Left colon (tissue), 2 donors: ENCODE measurements at regions of chr15 and their contacts with region 1.

Region 1: GRCh38 chr15:34927726-34928125 is 41.8 kb downstream of the AQR start:
- DNase-seq: no peak
- ATAC-seq: no peak

Region 2: GRCh38 chr15:34709866-34710265 is 217.9 kb before region 1 on chr15:
- intact Hi-C with region 1: loop called in 1 of 2 experiments (anchors 10 kb)
- DNase-seq: no peak
- ATAC-seq: no peak

Region 3: DNA sequence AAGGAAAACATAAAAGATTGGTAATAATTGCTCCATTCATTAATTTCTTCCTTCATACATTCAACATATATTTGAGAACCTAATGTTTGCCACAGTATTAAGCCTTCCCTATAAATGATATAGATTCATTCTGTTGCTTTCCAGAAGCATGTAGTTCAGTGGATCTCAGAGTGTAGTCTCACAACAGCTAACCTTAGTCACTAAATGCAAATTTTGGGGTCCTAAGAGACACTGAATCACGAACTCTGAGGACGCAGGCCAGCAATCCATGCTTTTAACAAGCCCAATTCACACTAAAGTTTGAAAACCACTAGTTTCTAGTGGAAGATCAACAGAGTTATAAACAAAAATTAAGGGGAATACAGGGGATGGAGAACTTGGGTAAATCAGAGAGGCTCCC is 49.0 kb after region 1 on chr15:
- intact Hi-C with region 1: no loop called
- DNase-seq: no peak
- ATAC-seq: no peak